K562 (cell line): ENCODE measurements at regions of chr19 and their contacts with region 1.

Region 1: GRCh38 chr19:12669270-12670158 is 2.9 kb downstream of the WDR83 start:
- DNase-seq: peak; percentile 52 to 89 (median 68)
- ATAC-seq: peak; percentile 59
- H3K4me3 ChIP-seq: peak overlapping the region; percentile 74
- H3K27ac ChIP-seq: peak overlapping the region; percentile 94
- H3K4me1 ChIP-seq: peaks cover 18 to 53% of the 10 kb centered on the region in 2 experiments; a peak in 4 of 5 replicates
- H3K27me3 ChIP-seq: no peaks in the 10 kb centered on the region
- CTCF ChIP-seq: no peak
- EP300 ChIP-seq: no peak
- POLR2A ChIP-seq: peak; percentile 79
- RAD21 ChIP-seq: peak in 1 of 2 experiments; percentile 7; a peak in 1 of 4 replicates

Region 2: DNA sequence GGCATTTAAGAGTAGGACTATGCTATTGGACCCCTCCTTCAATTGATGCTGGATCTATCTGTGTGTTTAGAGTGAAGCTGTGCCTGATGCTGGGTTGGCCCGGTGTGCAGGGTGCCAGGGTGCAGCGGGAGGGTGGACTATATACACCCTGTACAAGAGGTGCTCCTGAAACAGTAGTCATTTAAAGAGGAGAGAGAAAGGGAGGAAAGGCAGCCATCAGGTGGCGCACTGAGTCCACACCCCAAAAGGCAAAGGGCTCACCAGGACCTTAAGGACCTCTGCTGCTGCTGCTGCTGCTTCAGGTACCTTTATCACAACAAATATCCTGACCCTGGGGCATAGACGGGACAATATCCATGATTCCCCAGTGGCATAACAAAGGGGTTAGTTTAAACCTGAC is 467.3 kb before region 1 on chr19:
- CTCF ChIA-PET with region 1: no interaction called
- POLR2A ChIA-PET with region 1: no interaction called
- in situ Hi-C with region 1: loop called (anchors 10 kb)
- intact Hi-C with region 1: no loop called
- DNase-seq: peak in 1 of 4 experiments; percentile 51
- ATAC-seq: peak; percentile 86
- H3K4me3 ChIP-seq: no peak overlapping the region
- H3K27ac ChIP-seq: no peak overlapping the region
- H3K4me1 ChIP-seq: no peaks in the 10 kb centered on the region
- H3K27me3 ChIP-seq: no peaks in the 10 kb centered on the region
- CTCF ChIP-seq: peak; percentile 43 to 70 (median 65)
- EP300 ChIP-seq: no peak
- POLR2A ChIP-seq: no peak
- RAD21 ChIP-seq: peak in 1 of 2 experiments; percentile 68; a peak in 3 of 4 replicates

Region 3: DNA sequence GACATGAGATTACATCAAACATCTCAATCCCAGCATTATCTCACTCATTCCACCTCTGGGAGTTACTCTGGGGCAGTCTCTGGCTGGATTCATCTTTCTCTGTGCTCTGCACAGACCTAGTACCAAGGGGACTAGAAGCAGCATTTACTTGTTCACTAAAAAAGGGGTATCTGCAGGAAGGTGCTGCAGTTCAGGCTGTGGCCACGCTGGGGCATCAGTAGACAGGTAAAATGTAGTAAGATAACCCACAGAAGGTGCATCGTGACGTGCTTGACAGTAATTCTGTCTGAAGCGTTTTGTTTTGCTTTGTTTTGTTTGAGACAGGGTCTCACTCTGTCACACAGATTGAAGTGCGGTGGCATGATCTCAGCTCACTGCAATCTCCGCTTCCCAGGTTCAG is 147.5 kb before region 1 on chr19:
- CTCF ChIA-PET with region 1: interaction called, 3 read pairs
- POLR2A ChIA-PET with region 1: no interaction called
- in situ Hi-C with region 1: no loop called
- intact Hi-C with region 1: loop called (anchors 1 kb)
- DNase-seq: peak; percentile 29 to 69 (median 51)
- ATAC-seq: peak; percentile 65
- H3K4me3 ChIP-seq: no peak overlapping the region
- H3K27ac ChIP-seq: no peak overlapping the region
- H3K4me1 ChIP-seq: no peaks in the 10 kb centered on the region
- H3K27me3 ChIP-seq: no peaks in the 10 kb centered on the region
- CTCF ChIP-seq: peak; percentile 42 to 73 (median 65)
- EP300 ChIP-seq: no peak
- POLR2A ChIP-seq: no peak
- RAD21 ChIP-seq: peak in 1 of 2 experiments; percentile 70; a peak in 2 of 4 replicates

Region 4: DNA sequence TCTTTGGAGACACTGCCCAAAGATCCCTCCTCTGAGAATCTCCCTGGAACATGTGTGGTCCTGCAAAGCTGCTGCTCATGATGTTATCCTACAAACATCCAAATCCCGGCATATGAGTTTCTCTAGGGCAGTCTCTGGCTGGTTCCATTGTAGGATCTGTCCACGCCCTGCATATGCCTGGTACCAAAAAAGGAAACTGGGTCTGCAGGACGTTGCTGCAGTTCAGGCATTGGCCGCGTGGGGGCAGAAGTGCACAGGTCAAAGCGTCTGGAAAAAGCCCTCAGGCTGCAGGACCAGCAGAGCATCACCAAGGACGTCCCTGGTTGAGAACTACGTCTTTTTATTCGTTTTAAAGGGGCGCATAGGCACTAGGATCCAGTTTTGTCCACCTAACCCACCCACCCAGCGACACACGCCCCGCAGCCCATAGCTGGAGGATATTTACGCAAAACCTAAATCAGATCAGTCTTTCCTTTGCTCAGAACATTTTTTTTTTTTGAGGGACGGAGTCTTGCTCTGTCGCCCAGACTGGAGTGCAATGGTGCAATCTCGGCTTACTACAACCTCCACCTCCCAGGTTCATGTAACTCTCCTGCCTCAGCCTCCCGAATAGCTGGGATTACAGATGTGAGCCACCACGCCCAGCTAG is 105.4 kb before region 1 on chr19:
- CTCF ChIA-PET with region 1: interaction called, 7 read pairs
- POLR2A ChIA-PET with region 1: no interaction called
- in situ Hi-C with region 1: loop called (anchors 5 kb)
- intact Hi-C with region 1: loop called (anchors 2 kb)
- DNase-seq: peak; percentile 84 to 86 (median 85)
- ATAC-seq: peak; percentile 91
- H3K4me3 ChIP-seq: no peak overlapping the region
- H3K27ac ChIP-seq: no peak overlapping the region
- H3K4me1 ChIP-seq: no peaks in the 10 kb centered on the region; a peak in 1 of 5 replicates
- H3K27me3 ChIP-seq: no peaks in the 10 kb centered on the region
- CTCF ChIP-seq: peak; percentile 89 to 96 (median 94)
- EP300 ChIP-seq: no peak
- POLR2A ChIP-seq: no peak
- RAD21 ChIP-seq: peak; percentile 37 to 83

Region 5: GRCh38 chr19:12639901-12640613 is 29.5 kb before region 1 on chr19:
- CTCF ChIA-PET with region 1: no interaction called
- POLR2A ChIA-PET with region 1: interaction called, 4 read pairs
- in situ Hi-C with region 1: no loop called
- intact Hi-C with region 1: loop called (anchors 1 kb)
- DNase-seq: peak; percentile 78 to 87 (median 84)
- ATAC-seq: peak; percentile 99
- H3K4me3 ChIP-seq: no peak overlapping the region
- H3K27ac ChIP-seq: no peak overlapping the region
- H3K4me1 ChIP-seq: peaks cover 2 to 13% of the 10 kb centered on the region in 2 experiments; a peak in 2 of 5 replicates
- H3K27me3 ChIP-seq: no peaks in the 10 kb centered on the region
- CTCF ChIP-seq: peak; percentile 75 to 91 (median 85)
- EP300 ChIP-seq: no peak
- POLR2A ChIP-seq: no peak
- RAD21 ChIP-seq: peak in 1 of 2 experiments; percentile 61; a peak in 2 of 4 replicates

Region 6: DNA sequence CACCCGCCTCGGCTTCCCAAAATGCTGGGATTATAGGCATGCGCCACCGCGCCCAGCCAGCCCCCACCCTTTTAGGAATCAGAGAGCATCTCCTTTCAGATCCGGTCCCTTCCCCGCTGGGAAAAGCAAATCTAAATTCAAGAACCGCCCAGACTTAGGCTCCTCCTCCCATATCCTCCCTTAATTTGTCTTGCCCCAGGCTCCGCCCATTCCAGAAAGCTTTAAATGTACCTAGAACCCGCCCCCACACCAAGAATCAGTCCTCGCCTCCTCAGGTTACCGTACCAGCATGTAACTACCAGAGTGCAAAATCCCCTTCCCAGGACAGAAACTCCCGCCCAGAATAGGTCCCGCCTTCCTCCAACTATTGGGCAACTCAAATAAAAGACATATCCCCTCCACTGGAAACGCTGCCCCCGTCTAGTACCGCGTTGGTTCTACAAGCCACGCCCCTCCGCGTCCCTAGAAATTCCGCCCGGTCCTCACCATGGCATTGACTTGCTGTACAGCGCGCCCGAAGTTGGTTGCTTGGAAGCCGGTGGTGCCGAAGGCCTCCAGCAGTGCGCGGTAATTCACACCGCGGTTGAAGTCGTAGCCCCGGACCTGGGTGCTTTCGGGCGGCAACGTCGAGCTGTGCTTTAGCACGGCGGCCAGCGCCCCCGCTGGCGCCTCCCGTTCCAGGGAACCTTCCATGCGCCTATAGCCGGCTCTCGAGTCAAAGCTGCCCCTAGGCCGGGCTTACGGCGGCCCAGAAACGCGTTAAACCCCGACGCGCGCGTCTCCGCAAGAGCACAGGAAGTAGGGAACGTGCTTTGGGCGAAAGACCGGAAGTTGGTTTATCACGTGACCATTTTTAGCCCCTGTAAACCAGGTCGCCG is 11.8 kb after region 1 on chr19 and contains the start of gene DHPS:
- CTCF ChIA-PET with region 1: no interaction called
- POLR2A ChIA-PET with region 1: interaction called, 39 read pairs
- in situ Hi-C with region 1: no loop called
- intact Hi-C with region 1: no loop called
- DNase-seq: peak; percentile 85 to 99 (median 90)
- ATAC-seq: peak; percentile 90
- H3K4me3 ChIP-seq: peak within 1 kb of the TSS; percentile 68
- H3K27ac ChIP-seq: peak within 1 kb of the TSS; percentile 98
- H3K4me1 ChIP-seq: peaks cover 0 to 19% of the 10 kb centered on the region in 2 experiments; a peak in 3 of 5 replicates
- H3K27me3 ChIP-seq: no peaks in the 10 kb centered on the region
- CTCF ChIP-seq: peak in 1 of 3 experiments; percentile 22; a peak in 2 of 6 replicates
- EP300 ChIP-seq: no peak; the same call in 1 of the 2 replicates
- POLR2A ChIP-seq: peak; percentile 94
- RAD21 ChIP-seq: no peak
- polyA plus RNA-seq, gene DHPS: 47.1 to 54.1 TPM